ENCODE measurements at regions of chr1 and their contacts with region 1.

Region 1: GRCh38 chr1:27671964-27672749 is at the start of gene IFI6:
- DNase-seq: peak; percentile 88
- ATAC-seq: peak; percentile 91
- H3K4me3 Mint-ChIP-seq: peak within 1 kb of the TSS; percentile 83
- H3K27ac Mint-ChIP-seq: peak within 1 kb of the TSS; percentile 89
- H3K4me1 Mint-ChIP-seq: peaks cover 31% of the 10 kb centered on the region
- H3K27me3 Mint-ChIP-seq: no peaks in the 10 kb centered on the region
- total RNA-seq, gene IFI6: 41.8 to 62.5 TPM

Region 2: DNA sequence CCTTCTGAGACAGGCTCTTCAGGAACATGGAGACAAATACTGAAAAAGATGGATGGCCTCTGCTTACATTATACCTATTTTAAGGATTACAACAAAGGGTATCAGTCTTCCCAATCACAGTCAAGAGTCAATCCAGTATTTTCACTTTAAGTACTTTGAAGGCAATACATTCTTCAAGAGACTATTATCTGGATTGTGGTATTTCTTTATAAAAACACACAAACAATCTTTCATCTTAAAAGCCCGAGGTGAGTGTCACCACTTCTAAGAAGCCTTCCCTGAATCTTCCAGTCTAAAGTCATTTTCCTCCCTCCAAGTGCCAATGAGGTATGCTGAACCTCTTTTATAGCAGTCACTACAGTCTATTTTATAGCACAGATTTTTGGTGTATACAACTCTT is 227.5 kb before region 1 on chr1:
- CTCF ChIA-PET with region 1: no interaction called
- POLR2A ChIA-PET with region 1: no interaction called
- intact Hi-C with region 1: no loop called
- DNase-seq: no peak
- ATAC-seq: no peak
- H3K4me3 Mint-ChIP-seq: peak overlapping the region; percentile 61
- H3K27ac Mint-ChIP-seq: peak overlapping the region; percentile 95
- H3K4me1 Mint-ChIP-seq: peaks cover 55% of the 10 kb centered on the region
- H3K27me3 Mint-ChIP-seq: no peaks in the 10 kb centered on the region

Region 3: GRCh38 chr1:27632387-27633297 is 39.5 kb before region 1 on chr1:
- CTCF ChIA-PET with region 1: no interaction called
- POLR2A ChIA-PET with region 1: no interaction called
- intact Hi-C with region 1: no loop called
- DNase-seq: peak; percentile 80
- ATAC-seq: peak; percentile 62
- H3K4me3 Mint-ChIP-seq: peak overlapping the region; percentile 42
- H3K27ac Mint-ChIP-seq: peak overlapping the region; percentile 62
- H3K4me1 Mint-ChIP-seq: peaks cover 70% of the 10 kb centered on the region
- H3K27me3 Mint-ChIP-seq: no peaks in the 10 kb centered on the region

Region 4: GRCh38 chr1:27719286-27720251 is 47.4 kb after region 1 on chr1:
- CTCF ChIA-PET with region 1: interaction called, 5 read pairs
- POLR2A ChIA-PET with region 1: interaction called, 8 read pairs
- intact Hi-C with region 1: loop called in 1 of 2 experiments (anchors 1 kb)
- DNase-seq: peak; percentile 9
- ATAC-seq: no peak
- H3K4me3 Mint-ChIP-seq: no peak overlapping the region
- H3K27ac Mint-ChIP-seq: no peak overlapping the region
- H3K4me1 Mint-ChIP-seq: peaks cover 1% of the 10 kb centered on the region
- H3K27me3 Mint-ChIP-seq: peaks cover 6% of the 10 kb centered on the region

Region 5: GRCh38 chr1:27830621-27831424 is 158.7 kb after region 1 on chr1 and contains the start of gene PPP1R8:
- CTCF ChIA-PET with region 1: interaction called, 10 read pairs
- POLR2A ChIA-PET with region 1: interaction called, 6 read pairs
- intact Hi-C with region 1: loop called (anchors 1 to 2 kb)
- DNase-seq: peak; percentile 94
- ATAC-seq: peak; percentile 99
- H3K4me3 Mint-ChIP-seq: peak within 1 kb of the TSS; percentile 94
- H3K27ac Mint-ChIP-seq: peak within 1 kb of the TSS; percentile 94
- H3K4me1 Mint-ChIP-seq: peaks cover 40% of the 10 kb centered on the region
- H3K27me3 Mint-ChIP-seq: no peaks in the 10 kb centered on the region
- total RNA-seq, gene PPP1R8: 49.6 to 65.9 TPM

Region 6: GRCh38 chr1:27979151-27979858 is 307.1 kb after region 1 on chr1:
- CTCF ChIA-PET with region 1: no interaction called
- POLR2A ChIA-PET with region 1: no interaction called
- intact Hi-C with region 1: loop called in 1 of 2 experiments (anchors 1 kb)
- DNase-seq: no peak
- ATAC-seq: peak; percentile 90
- H3K4me3 Mint-ChIP-seq: no peak overlapping the region
- H3K27ac Mint-ChIP-seq: peak overlapping the region; percentile 34
- H3K4me1 Mint-ChIP-seq: no peaks in the 10 kb centered on the region
- H3K27me3 Mint-ChIP-seq: no peaks in the 10 kb centered on the region

Region 7: DNA sequence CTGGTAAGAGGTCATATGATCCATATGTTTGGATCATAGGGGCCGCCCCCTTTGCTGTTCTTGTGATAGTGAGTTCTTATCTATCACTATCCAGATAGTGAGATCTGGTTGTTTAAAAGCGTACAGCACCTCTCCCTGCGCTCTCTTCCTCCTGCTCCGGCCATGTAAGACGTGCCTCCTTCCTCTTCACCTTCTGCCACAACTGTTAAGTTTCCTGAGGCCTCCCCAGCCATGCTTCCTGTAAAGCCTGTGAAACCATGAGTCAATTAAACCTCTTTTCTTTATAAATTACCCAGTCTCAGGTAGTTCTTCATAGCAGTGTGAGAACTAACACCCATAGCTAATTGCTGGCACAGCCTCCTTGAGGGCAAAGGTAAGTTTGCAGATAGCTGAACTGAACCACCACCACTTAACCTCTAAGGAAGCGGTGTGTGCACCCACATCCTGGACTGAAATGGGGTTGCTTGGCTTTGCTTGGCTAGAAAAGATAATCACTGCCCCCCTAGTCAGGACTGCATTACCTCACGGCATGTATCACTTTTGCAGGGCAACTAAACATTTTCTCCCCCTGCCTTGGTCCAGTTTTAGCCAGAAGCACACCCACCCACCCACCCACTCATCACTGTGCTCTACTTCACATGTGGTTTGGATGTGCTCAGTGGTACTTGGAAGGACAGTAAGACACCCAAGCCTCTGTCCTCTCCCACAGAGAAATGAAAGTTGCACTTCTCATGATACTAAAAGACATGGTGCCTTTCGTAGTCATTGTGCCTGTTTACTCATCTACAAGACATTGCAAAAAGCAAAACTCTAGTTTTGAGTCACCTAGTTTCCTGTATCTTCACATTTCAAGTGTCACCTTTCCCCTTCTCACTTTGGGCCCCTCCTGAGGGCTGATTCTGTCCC is 527.4 kb after region 1 on chr1:
- CTCF ChIA-PET with region 1: no interaction called
- POLR2A ChIA-PET with region 1: no interaction called
- intact Hi-C with region 1: loop called in 1 of 2 experiments (anchors 1 kb)
- DNase-seq: peak; percentile 84
- ATAC-seq: peak; percentile 92
- H3K4me3 Mint-ChIP-seq: peak overlapping the region; percentile 37
- H3K27ac Mint-ChIP-seq: peak overlapping the region; percentile 89
- H3K4me1 Mint-ChIP-seq: peaks cover 47% of the 10 kb centered on the region
- H3K27me3 Mint-ChIP-seq: no peaks in the 10 kb centered on the region